ENCODE measurements at regions of chr4 and their contacts with region 1.

Region 1: GRCh38 chr4:158624889-158625478 is 46.7 kb downstream of the C4orf46 start:
- DNase-seq: peak; percentile 53
- ATAC-seq: peak; percentile 71; the same call in 2 of the 3 replicates
- H3K4me3 ChIP-seq: no peak overlapping the region
- H3K27ac ChIP-seq: no peak overlapping the region
- H3K4me1 ChIP-seq: no peaks in the 10 kb centered on the region
- H3K27me3 ChIP-seq: no peaks in the 10 kb centered on the region; a peak in 1 of 5 replicates
- CTCF ChIP-seq: peak; percentile 75
- EP300 ChIP-seq: no peak
- POLR2A ChIP-seq: no peak
- RAD21 ChIP-seq: peak; percentile 59; the same call in 1 of the 2 replicates

Region 2: DNA sequence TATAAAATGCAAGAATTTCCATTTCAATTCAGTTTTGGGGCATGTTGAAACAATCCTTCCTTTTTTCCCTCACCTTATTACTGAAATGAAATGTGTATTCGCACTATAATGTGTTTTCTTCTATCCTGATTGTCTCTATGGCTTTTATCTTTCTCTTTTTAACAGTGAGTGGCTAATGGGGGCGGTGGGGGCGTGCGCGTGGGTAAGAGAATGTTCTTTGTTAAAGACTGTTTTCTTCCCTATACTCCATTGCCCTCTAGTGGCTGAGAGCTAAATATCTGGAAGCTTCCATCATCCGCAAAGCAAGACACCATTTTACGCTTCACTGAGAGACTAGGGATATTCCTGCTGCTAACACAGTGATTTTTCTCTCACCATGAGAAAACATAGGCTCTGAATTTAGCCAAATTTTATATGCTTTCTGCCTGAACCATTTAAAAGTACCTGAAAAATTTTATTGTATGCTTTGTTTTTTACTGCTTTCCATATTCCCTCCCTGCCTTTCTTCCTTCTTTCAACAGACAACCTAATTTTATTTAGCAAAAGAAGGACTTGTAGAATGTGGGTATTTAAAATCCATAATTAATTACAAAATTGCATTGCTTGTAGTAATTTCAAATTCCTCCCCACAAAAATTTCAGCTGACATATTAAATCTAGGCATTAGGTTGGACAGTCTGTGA is 646.2 kb before region 1 on chr4:
- CTCF ChIA-PET with region 1: no interaction called
- POLR2A ChIA-PET with region 1: no interaction called
- in situ Hi-C with region 1: loop called (anchors 25 kb)
- intact Hi-C with region 1: no loop called
- DNase-seq: peak; percentile 68
- ATAC-seq: peak; percentile 92
- H3K4me3 ChIP-seq: no peak overlapping the region
- H3K27ac ChIP-seq: no peak overlapping the region
- H3K4me1 ChIP-seq: 0 out of 2 replicates have a peak, but pooled peaks cover 6% of the 10 kb centered on the region
- H3K27me3 ChIP-seq: no peaks in the 10 kb centered on the region; a peak in 1 of 5 replicates
- CTCF ChIP-seq: peak; percentile 88
- EP300 ChIP-seq: no peak
- POLR2A ChIP-seq: no peak
- RAD21 ChIP-seq: peak; percentile 85

Region 3: GRCh38 chr4:158253350-158253980 is 371.5 kb before region 1 on chr4:
- CTCF ChIA-PET with region 1: interaction called, 10 read pairs
- POLR2A ChIA-PET with region 1: no interaction called
- in situ Hi-C with region 1: loop called (anchors 5 kb)
- intact Hi-C with region 1: loop called (anchors 1 kb)
- DNase-seq: peak; percentile 53
- ATAC-seq: peak; percentile 88
- H3K4me3 ChIP-seq: no peak overlapping the region
- H3K27ac ChIP-seq: no peak overlapping the region
- H3K4me1 ChIP-seq: peaks cover 7% of the 10 kb centered on the region
- H3K27me3 ChIP-seq: no peaks in the 10 kb centered on the region
- CTCF ChIP-seq: peak; percentile 74
- EP300 ChIP-seq: no peak
- POLR2A ChIP-seq: no peak
- RAD21 ChIP-seq: 0 out of 2 replicates have a peak, but pooled peaks have one; percentile 30

Region 4: GRCh38 chr4:158259955-158260575 is 364.9 kb before region 1 on chr4:
- CTCF ChIA-PET with region 1: interaction called, 22 read pairs
- POLR2A ChIA-PET with region 1: no interaction called
- in situ Hi-C with region 1: no loop called
- intact Hi-C with region 1: loop called (anchors 1 kb)
- DNase-seq: peak; percentile 9
- ATAC-seq: peak; percentile 46; the same call in 1 of the 3 replicates
- H3K4me3 ChIP-seq: no peak overlapping the region
- H3K27ac ChIP-seq: no peak overlapping the region
- H3K4me1 ChIP-seq: no peaks in the 10 kb centered on the region
- H3K27me3 ChIP-seq: no peaks in the 10 kb centered on the region
- CTCF ChIP-seq: peak; percentile 41
- EP300 ChIP-seq: no peak
- POLR2A ChIP-seq: no peak
- RAD21 ChIP-seq: no peak

Region 5: GRCh38 chr4:158496030-158496741 is 128.8 kb before region 1 on chr4:
- CTCF ChIA-PET with region 1: no interaction called
- POLR2A ChIA-PET with region 1: no interaction called
- in situ Hi-C with region 1: no loop called
- intact Hi-C with region 1: loop called (anchors 2 kb)
- DNase-seq: peak; percentile 10
- ATAC-seq: no peak
- H3K4me3 ChIP-seq: no peak overlapping the region
- H3K27ac ChIP-seq: no peak overlapping the region
- H3K4me1 ChIP-seq: no peaks in the 10 kb centered on the region
- H3K27me3 ChIP-seq: no peaks in the 10 kb centered on the region
- CTCF ChIP-seq: peak; percentile 56
- EP300 ChIP-seq: no peak
- POLR2A ChIP-seq: no peak
- RAD21 ChIP-seq: no peak

Region 6: GRCh38 chr4:158782551-158783360 is 157.8 kb after region 1 on chr4:
- CTCF ChIA-PET with region 1: no interaction called
- POLR2A ChIA-PET with region 1: no interaction called
- in situ Hi-C with region 1: no loop called
- intact Hi-C with region 1: no loop called
- DNase-seq: peak; percentile 72
- ATAC-seq: peak; percentile 99
- H3K4me3 ChIP-seq: peak overlapping the region in 2 of 3 experiments; percentile 12 to 17; a peak in 1 of 6 replicates
- H3K27ac ChIP-seq: peak overlapping the region; percentile 68
- H3K4me1 ChIP-seq: peaks cover 77% of the 10 kb centered on the region
- H3K27me3 ChIP-seq: no peaks in the 10 kb centered on the region
- CTCF ChIP-seq: no peak
- EP300 ChIP-seq: peak in 1 of 2 experiments; percentile 25; a peak in 1 of 4 replicates
- POLR2A ChIP-seq: no peak
- RAD21 ChIP-seq: no peak